AG04449 (cell line): ENCODE measurements at regions of chr1 and their contacts with region 1.

Region 1: GRCh38 chr1:161427733-161428516 is 60.2 kb upstream of the CFAP126 start:
- DNase-seq: no peak
- H3K4me3 ChIP-seq: peak overlapping the region; percentile 46
- CTCF ChIP-seq: no peak

Region 2: DNA sequence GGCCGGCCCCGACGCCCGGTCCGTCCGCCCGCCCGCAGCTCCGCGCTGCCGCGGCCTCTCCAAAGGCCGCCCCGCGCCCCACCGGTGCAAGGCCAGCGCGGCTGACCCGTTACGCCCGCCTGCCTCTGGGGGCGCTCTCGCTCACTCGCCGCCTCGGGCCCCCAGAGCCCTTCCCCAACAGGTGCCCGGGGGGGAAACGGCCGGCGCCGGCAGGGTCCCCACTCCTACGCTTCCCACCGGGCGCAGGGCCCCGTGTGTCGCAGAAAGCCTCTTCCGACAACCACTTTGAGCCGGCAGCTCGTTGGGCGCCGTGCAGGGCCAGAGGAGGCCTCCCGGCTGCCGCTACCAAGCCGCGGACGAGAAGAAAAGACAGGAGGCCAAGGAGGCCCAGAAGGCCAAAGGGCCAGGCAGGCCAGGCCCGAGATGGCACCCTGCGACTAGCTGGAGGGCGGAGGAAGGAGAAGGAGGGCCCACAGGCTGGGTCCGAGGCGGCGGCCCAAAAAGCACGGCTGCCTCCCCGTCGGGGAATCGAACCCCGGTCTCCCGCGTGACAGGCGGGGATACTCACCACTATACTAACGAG is 12.5 kb after region 1 on chr1:
- CTCF ChIA-PET with region 1: interaction called, 42 read pairs
- POLR2A ChIA-PET with region 1: no interaction called
- DNase-seq: no peak
- H3K4me3 ChIP-seq: peak overlapping the region; percentile 59
- CTCF ChIP-seq: peak; percentile 88